ENCODE measurements at regions of chr5 and their contacts with region 1.

Region 1: DNA sequence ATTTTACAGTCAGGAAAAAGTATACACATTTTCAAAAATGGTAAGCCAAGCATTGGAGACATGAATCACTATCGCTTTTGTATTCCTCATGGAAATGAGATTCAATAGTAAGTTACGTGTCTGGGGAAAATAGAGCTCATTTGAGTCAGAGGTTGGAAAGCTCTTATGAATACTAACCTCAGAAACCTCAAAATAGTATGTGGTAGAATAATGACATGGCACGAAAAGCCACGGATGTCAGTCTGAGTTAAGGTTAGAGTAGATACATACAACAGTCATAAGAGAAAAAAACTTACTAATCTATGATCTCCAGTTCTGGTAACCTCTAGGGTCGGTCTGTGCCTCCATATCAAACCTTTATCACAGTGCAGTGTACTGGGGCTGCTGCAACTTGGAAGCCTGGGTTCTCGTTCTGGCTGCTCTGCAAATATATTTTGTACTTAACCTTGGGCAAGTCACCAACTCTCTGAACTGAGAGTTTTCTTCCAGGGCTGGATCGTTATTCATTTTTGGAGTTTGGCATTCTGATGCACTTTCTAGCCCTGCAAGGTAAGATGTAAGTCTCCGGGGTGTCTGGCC is 31.8 kb downstream of the MAP1B start:
- DNase-seq: no peak
- H3K4me3 ChIP-seq: no peak overlapping the region
- H3K4me3 Mint-ChIP-seq: no peak overlapping the region
- H3K27ac ChIP-seq: no peak overlapping the region
- H3K27ac Mint-ChIP-seq: no peak overlapping the region
- H3K4me1 ChIP-seq: no peaks in the 10 kb centered on the region
- H3K4me1 Mint-ChIP-seq: no peaks in the 10 kb centered on the region
- H3K27me3 ChIP-seq: peaks cover 13 to 28% of the 10 kb centered on the region in 2 donors
- H3K27me3 Mint-ChIP-seq: peaks cover 15 to 37% (median 25%) of the 10 kb centered on the region in 3 donors
- CTCF ChIP-seq: no peak

Region 2: GRCh38 chr5:72307968-72308852 is 169.2 kb after region 1 on chr5:
- intact Hi-C with region 1: loop called in 1 of 2 experiments (anchors 5 kb)
- DNase-seq: peak; percentile 96 to 97 (median 96)
- H3K4me3 ChIP-seq: peak overlapping the region; percentile 67 to 89 (median 82)
- H3K4me3 Mint-ChIP-seq: peak overlapping the region; percentile 90 to 93
- H3K27ac ChIP-seq: peak overlapping the region; percentile 92 to 95
- H3K27ac Mint-ChIP-seq: peak overlapping the region; percentile 93 to 97 (median 95)
- H3K4me1 ChIP-seq: peaks cover 8 to 10% of the 10 kb centered on the region in 2 donors
- H3K4me1 Mint-ChIP-seq: peaks cover 18% of the 10 kb centered on the region
- H3K27me3 ChIP-seq: no peaks in the 10 kb centered on the region
- H3K27me3 Mint-ChIP-seq: peaks cover 0 to 2% (median 2%) of the 10 kb centered on the region in 3 donors
- CTCF ChIP-seq: peak; percentile 84